Gastrocnemius medialis (tissue), 4 donors: ENCODE measurements at regions of chr11 and their contacts with region 1.

Region 1: DNA sequence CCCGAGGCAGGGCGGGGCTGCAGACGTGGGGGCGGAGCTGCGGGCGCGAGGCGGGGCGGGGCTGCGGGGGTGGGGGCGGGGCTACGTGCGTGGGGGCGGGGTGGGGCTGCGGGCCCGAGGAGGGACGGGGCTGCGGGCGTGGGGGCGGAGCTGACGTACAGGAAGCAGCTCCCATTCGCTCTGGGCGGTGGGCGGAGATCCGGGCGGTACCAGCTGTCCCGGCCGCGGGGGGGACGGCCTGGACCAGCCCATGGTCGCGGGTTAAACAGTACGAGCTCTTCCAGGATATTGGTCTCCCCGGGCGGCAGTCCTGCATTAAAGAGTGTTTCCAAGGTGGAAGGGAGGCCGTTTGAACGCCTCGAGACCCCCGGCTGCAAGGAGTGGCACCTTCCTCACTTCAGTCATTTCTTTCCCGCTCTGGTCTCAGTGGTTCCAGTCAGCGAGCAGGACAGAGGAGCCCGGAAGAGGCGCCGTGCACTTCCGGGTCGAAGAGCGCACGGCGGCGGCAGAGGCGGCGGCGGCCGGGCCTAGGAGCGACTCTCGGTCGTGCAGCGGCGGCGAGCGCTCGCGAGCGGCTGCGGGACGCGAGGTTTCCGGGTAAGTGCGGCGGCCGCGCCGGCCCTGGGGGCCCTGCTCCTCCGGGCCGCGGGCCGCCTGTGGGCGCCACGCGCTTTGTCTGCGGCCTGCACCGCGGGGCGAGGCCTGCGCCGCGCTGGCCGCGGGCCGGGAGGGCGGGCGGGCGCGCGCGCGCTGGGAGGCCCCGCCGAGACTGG is at the start of gene PHRF1:
- DNase-seq: peak; percentile 93 to 95
- ATAC-seq: peak; percentile 93 to 97
- H3K4me3 ChIP-seq: peak within 1 kb of the TSS; percentile 75 to 99 (median 80)
- H3K27ac ChIP-seq: peak within 1 kb of the TSS; percentile 94 to 99 (median 96)
- H3K4me1 ChIP-seq: peaks cover 42 to 62% of the 10 kb centered on the region in 2 donors
- H3K27me3 ChIP-seq: no peaks in the 10 kb centered on the region
- CTCF ChIP-seq: no peak
- POLR2A ChIP-seq: peak; percentile 89 to 94
- total RNA-seq, gene PHRF1: 9.2 to 22.6 (median 20.8) TPM

Region 2: GRCh38 chr11:535519-536454 is 40.4 kb before region 1 on chr11 and contains the start of gene HRAS:
- in situ Hi-C with region 1: no loop called
- intact Hi-C with region 1: loop called (anchors 2 kb)
- DNase-seq: peak; percentile 91 to 92
- ATAC-seq: peak; percentile 84 to 88
- H3K4me3 ChIP-seq: peak within 1 kb of the TSS; percentile 75 to 82 (median 78)
- H3K27ac ChIP-seq: peak within 1 kb of the TSS; percentile 80 to 92 (median 90)
- H3K4me1 ChIP-seq: peaks cover 18 to 29% of the 10 kb centered on the region in 2 donors
- H3K27me3 ChIP-seq: peaks cover 21 to 25% (median 25%) of the 10 kb centered on the region in 3 donors
- CTCF ChIP-seq: no peak
- POLR2A ChIP-seq: peak; percentile 63 to 73
- total RNA-seq, gene HRAS: 17.1 to 50.0 (median 37.6) TPM

Region 3: DNA sequence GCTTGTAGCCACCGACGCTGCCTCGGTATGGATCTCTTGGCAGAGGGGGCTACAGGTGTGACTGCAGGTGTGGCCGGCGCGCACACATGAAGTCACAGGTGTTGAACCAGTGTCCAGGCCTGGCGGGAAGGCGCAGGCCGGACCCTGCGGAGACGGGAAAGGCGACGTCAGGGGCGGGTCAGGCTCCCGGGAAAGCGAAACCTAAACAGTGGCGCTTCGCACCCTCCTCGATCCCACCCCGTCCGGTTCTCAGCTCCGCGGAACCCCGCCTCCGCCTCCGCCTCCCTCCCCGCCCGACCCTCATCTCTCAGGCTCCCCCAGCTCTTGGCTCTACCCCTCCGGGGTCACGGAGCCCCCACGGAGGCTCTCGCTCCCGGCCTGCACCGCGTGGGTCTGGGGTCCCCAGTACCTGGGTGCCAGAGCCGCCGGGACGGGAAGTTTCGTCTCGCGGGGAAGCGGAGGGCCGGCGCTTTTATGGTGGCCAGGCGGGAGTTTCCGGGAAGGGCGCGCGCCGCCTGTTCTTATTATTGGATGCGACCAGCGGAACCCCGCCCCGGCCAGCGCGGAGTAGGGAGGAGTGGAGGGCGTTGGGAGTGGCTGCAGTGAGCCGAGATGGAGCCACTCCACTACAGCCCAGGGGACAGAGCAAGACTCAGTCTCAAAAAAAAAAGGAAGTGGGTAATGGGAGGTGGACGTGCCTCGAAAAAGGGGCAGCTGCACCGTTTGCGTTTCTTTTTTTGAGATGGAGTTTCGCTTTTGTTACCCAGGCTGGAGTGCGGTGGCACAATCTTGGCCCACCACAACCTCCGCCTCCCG is 39.5 kb after region 1 on chr11 and contains the start of gene IRF7:
- in situ Hi-C with region 1: no loop called
- intact Hi-C with region 1: loop called (anchors 1 kb)
- DNase-seq: peak; percentile 87 to 92
- ATAC-seq: peak; percentile 61 to 75
- H3K4me3 ChIP-seq: peak within 1 kb of the TSS; percentile 66 to 85 (median 77)
- H3K27ac ChIP-seq: peak within 1 kb of the TSS; percentile 91 to 94 (median 93)
- H3K4me1 ChIP-seq: peaks cover 40 to 43% of the 10 kb centered on the region in 2 donors
- H3K27me3 ChIP-seq: no peaks in the 10 kb centered on the region
- CTCF ChIP-seq: no peak
- POLR2A ChIP-seq: peak; percentile 84 to 92
- total RNA-seq, gene IRF7: 15.5 to 37.1 (median 26.3) TPM

Region 4: GRCh38 chr11:629237-629583 is 53.0 kb after region 1 on chr11:
- in situ Hi-C with region 1: no loop called
- intact Hi-C with region 1: loop called (anchors 2 kb)
- DNase-seq: peak; percentile 70 to 90
- ATAC-seq: peak; percentile 87 to 88
- H3K4me3 ChIP-seq: no peak overlapping the region
- H3K27ac ChIP-seq: peak overlapping the region; percentile 81 to 93 (median 86)
- H3K4me1 ChIP-seq: peaks cover 18 to 43% of the 10 kb centered on the region in 2 donors
- H3K27me3 ChIP-seq: peaks cover 0 to 4% (median 3%) of the 10 kb centered on the region in 3 donors
- CTCF ChIP-seq: peak in 4 of 5 experiments; percentile 28 to 50 (median 38)
- POLR2A ChIP-seq: no peak

Region 5: DNA sequence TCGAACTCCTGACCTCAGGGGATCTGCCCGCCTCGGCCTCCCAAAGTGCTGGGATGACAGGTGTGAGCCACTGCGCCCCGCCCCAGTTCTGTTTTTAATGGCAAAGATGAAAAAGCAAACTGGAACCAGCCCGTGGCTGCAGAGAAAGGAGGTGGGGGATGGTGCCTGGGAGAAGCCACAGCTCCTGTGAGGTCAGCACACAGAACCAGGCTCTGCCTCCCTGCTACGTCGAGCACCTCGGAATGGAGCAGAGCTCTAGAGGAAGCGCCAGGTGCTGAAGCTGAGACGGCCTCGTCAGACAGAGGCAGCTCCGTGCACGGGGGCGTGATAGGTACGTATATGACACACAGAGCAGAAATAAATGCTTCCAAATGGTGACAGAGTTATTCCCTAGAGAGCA is 69.4 kb after region 1 on chr11:
- in situ Hi-C with region 1: no loop called
- intact Hi-C with region 1: no loop called
- DNase-seq: no peak
- ATAC-seq: no peak
- H3K4me3 ChIP-seq: no peak overlapping the region
- H3K27ac ChIP-seq: no peak overlapping the region
- H3K4me1 ChIP-seq: no peaks in the 10 kb centered on the region
- H3K27me3 ChIP-seq: no peaks in the 10 kb centered on the region
- CTCF ChIP-seq: no peak
- POLR2A ChIP-seq: no peak

Region 6: DNA sequence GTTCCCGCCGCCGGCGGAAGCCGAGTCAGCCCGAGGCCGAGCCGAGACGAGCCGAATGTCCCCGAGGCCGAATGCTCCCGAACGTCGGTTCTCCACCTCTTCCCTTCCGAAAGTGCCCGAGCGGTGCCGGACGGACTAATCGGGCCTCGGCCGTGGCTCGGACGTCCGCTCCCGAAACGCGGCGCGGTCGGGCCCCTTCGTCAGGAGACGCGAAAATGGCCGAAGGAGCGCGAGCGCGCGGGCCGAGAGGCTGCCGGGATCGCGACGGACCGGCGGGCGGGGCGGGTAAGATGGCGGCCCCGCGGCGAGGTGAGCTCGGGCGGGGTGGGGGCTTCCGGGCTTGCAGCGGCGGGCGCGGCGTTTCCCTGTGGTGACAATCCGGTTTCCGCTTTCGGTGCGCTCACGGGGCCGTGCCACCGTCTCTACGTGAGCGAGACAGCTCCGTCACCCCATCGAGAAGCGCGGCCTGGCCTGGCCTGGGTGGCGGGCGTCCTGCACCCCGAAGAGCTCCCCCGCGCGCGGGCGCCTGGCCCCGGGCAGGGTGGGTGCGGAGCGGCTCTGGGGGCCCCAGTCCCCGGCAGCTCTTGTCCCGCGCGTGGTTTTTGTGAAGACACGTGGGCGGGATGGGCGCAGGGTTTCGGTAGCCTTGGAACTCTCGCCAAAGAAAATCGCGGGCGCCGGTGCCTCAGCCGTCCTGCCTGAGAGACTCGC is 119.5 kb after region 1 on chr11 and contains the start of gene TMEM80:
- in situ Hi-C with region 1: loop called in 3 of 4 experiments (anchors 25 kb)
- intact Hi-C with region 1: loop called (anchors 1 kb)
- DNase-seq: peak; percentile 99
- ATAC-seq: peak; percentile 72 to 74
- H3K4me3 ChIP-seq: peak within 1 kb of the TSS; percentile 77 to 92 (median 89)
- H3K27ac ChIP-seq: peak within 1 kb of the TSS; percentile 92 to 100 (median 98)
- H3K4me1 ChIP-seq: peaks cover 33 to 35% of the 10 kb centered on the region in 2 donors
- H3K27me3 ChIP-seq: no peaks in the 10 kb centered on the region
- CTCF ChIP-seq: no peak
- POLR2A ChIP-seq: peak; percentile 69 to 72
- total RNA-seq, gene TMEM80: 3.2 to 22.3 (median 14.3) TPM